WTC11 (cell line): ENCODE measurements at regions of chr5 and their contacts with region 1.

Region 1: GRCh38 chr5:7927466-7928375 is 58.8 kb downstream of the MTRR start:
- DNase-seq: peak; percentile 72
- ATAC-seq: peak; percentile 90
- H3K4me3 Mint-ChIP-seq: peak overlapping the region; percentile 18
- H3K27ac Mint-ChIP-seq: no peak overlapping the region
- H3K4me1 Mint-ChIP-seq: peaks cover 10% of the 10 kb centered on the region
- H3K27me3 Mint-ChIP-seq: peaks cover 2% of the 10 kb centered on the region
- CTCF ChIP-seq: peak; percentile 74

Region 2: DNA sequence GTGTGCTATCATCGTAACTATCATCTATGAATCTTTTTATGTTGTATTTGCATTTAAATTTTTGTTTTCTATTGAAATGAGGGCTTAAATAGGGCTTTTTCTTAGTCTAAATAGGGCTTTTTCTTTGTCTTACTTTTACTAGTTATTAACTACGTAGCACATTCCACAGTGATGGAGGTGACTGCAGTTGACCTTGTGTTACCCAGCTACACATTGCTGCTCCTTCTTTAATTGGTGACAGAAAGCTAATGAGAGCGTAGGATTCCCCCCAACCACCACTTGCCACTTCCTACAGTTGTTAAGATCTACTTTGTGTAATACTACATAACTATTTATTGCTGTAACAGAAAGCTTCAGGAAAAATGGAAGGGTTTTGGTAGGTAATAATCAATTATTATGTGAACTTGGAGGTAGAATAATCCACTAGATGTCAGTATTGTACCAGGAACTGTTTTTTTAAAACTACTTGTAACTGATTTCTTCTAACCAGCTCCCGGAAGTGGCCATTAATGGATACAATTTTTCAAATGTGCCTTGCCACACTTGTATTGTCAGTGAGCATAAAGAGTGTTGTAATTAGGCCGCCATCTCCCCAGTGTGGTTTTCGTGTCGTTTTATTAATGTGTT is 40.8 kb before region 1 on chr5:
- CTCF ChIA-PET with region 1: interaction called, 12 read pairs
- POLR2A ChIA-PET with region 1: no interaction called
- DNase-seq: no peak
- ATAC-seq: no peak
- H3K4me3 Mint-ChIP-seq: no peak overlapping the region
- H3K27ac Mint-ChIP-seq: no peak overlapping the region
- H3K4me1 Mint-ChIP-seq: no peaks in the 10 kb centered on the region
- H3K27me3 Mint-ChIP-seq: no peaks in the 10 kb centered on the region
- CTCF ChIP-seq: no peak

Region 3: DNA sequence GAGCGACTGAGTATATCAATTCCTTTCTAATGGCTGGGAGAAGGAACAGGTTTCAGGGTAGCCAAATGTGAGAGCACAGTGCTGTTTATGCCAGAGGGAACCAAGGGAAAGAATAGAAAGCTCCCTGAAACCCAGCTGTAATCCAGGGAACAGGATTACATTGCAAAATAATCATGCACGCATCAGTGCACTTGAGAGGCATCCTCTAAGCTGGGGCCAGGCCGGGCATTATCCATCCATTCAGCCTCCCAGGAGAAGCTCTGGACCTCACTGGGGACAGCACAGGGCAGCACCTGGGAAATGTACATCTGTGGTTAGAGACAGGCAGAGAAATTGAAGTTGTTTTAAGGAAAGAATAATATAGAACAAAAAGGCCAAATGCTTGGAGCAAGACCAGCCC is 14.0 kb after region 1 on chr5:
- CTCF ChIA-PET with region 1: interaction called, 29 read pairs
- POLR2A ChIA-PET with region 1: no interaction called
- DNase-seq: no peak
- ATAC-seq: no peak
- H3K4me3 Mint-ChIP-seq: no peak overlapping the region
- H3K27ac Mint-ChIP-seq: no peak overlapping the region
- H3K4me1 Mint-ChIP-seq: no peaks in the 10 kb centered on the region
- H3K27me3 Mint-ChIP-seq: peaks cover 3% of the 10 kb centered on the region
- CTCF ChIP-seq: no peak

Region 4: DNA sequence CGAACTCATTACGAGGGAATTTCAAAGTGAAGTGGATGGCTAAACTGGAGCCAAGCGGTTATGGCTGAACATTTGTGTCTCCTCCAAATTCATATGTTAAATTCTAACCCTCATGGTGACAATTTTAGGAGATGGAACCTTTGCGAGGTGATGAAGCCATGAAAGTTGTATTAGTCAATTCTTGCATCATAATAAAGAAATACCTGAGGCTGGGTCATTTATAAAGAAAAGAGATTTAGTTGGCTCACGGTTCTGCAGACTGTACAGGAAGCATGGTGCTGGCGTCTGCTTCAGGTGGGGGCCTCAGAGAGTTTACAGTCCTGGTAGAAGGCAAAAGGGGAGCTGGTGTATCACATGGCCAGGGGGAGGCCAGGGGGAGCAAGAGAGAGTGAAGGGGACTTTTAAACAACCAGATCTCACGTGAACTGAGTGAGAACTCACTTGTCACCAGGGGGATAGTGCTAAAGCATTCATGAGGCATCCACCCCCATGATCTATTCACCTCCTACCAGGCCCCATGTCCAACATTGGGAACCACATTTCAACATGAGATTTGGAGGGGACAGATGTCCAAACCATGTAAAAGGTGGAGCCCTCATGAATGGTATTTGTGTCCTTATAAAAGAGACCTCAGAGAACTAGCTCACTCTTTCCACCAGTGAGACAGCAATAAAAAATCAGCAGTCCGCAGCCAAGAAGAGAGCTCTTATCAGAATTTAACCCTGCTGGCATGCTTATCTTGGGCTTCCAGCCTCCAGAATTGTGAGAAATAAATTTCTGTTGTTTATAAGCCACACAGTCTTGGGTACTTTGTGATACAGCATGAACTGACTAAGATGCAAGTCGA is 84.6 kb after region 1 on chr5:
- CTCF ChIA-PET with region 1: interaction called, 10 read pairs
- POLR2A ChIA-PET with region 1: no interaction called
- DNase-seq: peak; percentile 69
- ATAC-seq: peak; percentile 95
- H3K4me3 Mint-ChIP-seq: no peak overlapping the region
- H3K27ac Mint-ChIP-seq: no peak overlapping the region
- H3K4me1 Mint-ChIP-seq: peaks cover 14% of the 10 kb centered on the region
- H3K27me3 Mint-ChIP-seq: 0 out of 2 replicates have a peak, but pooled peaks cover 5% of the 10 kb centered on the region
- CTCF ChIP-seq: no peak

Region 5: GRCh38 chr5:8053270-8053669 is 125.5 kb after region 1 on chr5:
- CTCF ChIA-PET with region 1: interaction called, 14 read pairs
- POLR2A ChIA-PET with region 1: no interaction called
- DNase-seq: no peak
- ATAC-seq: no peak
- H3K4me3 Mint-ChIP-seq: no peak overlapping the region
- H3K27ac Mint-ChIP-seq: no peak overlapping the region
- H3K4me1 Mint-ChIP-seq: peaks cover 2% of the 10 kb centered on the region; the same call in 1 of the 2 replicates
- H3K27me3 Mint-ChIP-seq: peaks cover 8% of the 10 kb centered on the region
- CTCF ChIP-seq: no peak

Region 6: GRCh38 chr5:8184455-8185063 is 256.8 kb after region 1 on chr5:
- CTCF ChIA-PET with region 1: interaction called, 16 read pairs
- POLR2A ChIA-PET with region 1: no interaction called
- DNase-seq: peak; percentile 86
- ATAC-seq: peak; percentile 98
- H3K4me3 Mint-ChIP-seq: no peak overlapping the region
- H3K27ac Mint-ChIP-seq: no peak overlapping the region
- H3K4me1 Mint-ChIP-seq: peaks cover 11% of the 10 kb centered on the region
- H3K27me3 Mint-ChIP-seq: no peaks in the 10 kb centered on the region
- CTCF ChIP-seq: peak; percentile 91

Region 7: DNA sequence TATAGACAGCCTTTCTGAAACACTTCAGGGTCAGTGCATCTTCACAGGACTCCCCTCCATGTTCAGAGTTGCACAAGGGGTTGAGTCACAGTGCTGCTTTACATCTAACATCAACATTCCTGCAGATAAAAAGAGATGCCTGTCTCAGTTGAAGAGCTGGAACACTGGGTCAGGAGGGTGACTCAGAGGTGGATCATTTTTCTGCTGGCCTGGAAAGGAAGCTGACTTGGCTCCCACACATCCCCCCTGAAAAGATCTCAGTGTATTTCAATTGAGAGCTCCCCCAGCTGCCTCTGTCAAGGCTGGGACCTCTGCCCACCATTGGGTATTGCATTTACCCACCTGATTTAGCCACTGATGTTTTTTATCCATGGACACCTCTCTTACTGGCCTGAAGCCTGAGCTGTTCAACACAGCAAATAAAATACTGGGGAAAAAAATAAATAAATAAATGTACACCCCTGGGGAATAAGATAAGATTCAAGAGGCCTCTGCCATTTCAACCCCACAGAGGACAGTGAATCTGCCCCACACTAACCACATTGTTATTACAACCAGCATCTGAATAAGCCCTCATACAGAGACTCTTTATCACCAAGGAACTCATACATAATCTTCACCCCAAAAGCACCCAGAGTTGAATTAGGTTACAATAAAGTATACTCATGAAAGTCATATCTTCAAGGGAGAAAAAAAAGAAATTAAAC is 901.8 kb after region 1 on chr5:
- CTCF ChIA-PET with region 1: no interaction called
- POLR2A ChIA-PET with region 1: no interaction called
- DNase-seq: no peak
- ATAC-seq: no peak
- H3K4me3 Mint-ChIP-seq: no peak overlapping the region
- H3K27ac Mint-ChIP-seq: no peak overlapping the region
- H3K4me1 Mint-ChIP-seq: peaks cover 26% of the 10 kb centered on the region
- H3K27me3 Mint-ChIP-seq: no peaks in the 10 kb centered on the region
- CTCF ChIP-seq: no peak

Region 8: GRCh38 chr5:8839361-8840055 is 911.8 kb after region 1 on chr5:
- CTCF ChIA-PET with region 1: interaction called, 11 read pairs
- POLR2A ChIA-PET with region 1: no interaction called
- DNase-seq: no peak
- ATAC-seq: no peak
- H3K4me3 Mint-ChIP-seq: no peak overlapping the region
- H3K27ac Mint-ChIP-seq: no peak overlapping the region
- H3K4me1 Mint-ChIP-seq: no peaks in the 10 kb centered on the region
- H3K27me3 Mint-ChIP-seq: peaks cover 5% of the 10 kb centered on the region
- CTCF ChIP-seq: no peak